Posterior vena cava (tissue), 2 donors: ENCODE measurements at regions of chr12 and their contacts with region 1.

Region 1: GRCh38 chr12:9179781-9180180 is 28.4 kb downstream of the PZP start:
- DNase-seq: no peak

Region 2: DNA sequence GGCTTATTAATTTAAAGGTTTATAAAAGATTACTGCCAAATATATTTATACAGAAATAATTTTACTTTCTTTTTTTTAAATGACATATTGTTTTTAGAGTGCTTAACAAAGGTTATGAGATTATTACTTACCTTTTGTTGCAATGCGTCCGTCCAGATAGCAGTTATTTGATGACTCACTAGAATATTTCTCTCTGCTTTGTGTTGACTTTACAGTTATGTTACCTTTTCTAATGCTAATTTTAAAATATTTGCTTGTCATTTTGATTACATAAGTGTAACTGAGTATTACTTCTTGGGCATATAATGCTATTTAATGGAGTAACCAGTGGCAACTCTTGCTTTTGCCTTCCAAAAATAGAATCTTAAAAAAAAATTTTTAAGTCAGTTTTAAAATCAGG is 34.8 kb after region 1 on chr12:
- intact Hi-C with region 1: loop called in 1 of 2 experiments (anchors 1 kb)
- DNase-seq: no peak